ENCODE measurements at regions of chr2 and their contacts with region 1.

Region 1: DNA sequence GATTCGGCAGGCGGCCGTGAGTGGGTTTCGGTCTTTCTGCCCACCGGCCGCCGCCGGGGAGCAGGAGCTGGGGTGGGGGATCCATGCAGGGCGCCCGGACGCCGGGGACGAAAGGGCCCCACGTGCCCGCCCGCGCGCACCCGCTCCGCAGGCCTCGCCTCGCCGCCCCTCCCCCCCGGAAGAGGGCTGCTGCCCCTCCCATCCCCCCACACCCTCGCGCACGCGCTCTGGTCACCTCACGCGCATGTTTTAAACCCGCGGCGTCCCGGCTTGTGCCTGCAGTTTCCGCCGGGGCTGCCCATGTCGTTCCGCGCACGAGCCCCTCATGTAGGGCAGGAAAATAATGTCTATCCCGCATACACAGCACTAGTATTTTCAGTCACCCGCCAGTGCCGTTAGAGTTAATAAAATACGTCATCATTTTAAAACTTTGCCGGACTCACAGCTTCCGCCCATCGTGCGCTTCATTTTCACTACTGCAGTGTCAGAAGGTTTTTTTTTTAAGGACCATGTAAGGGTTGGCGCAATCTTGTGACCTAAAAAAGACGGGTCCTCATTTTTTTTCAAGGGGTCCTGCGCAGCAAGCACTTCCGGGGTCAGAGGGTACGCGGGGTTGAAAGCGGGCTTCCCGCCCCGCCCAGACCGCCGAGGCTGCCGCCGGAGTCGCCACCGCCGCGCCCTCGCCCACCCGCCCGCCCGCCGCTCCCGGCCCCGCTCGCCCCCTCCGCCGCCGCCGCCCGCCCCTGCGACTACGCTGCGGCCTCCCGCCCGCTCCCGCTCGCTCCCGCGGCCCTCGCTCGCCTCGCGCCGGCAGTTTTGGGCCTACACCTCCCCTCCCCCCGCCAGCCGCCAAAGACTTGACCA is at the start of gene PCBP1:
- DNase-seq: peak; percentile 84
- H3K4me3 ChIP-seq: peak within 1 kb of the TSS; percentile 67 to 91 (median 68)
- H3K27ac ChIP-seq: peak within 1 kb of the TSS; percentile 98 to 100 (median 100)
- H3K4me1 ChIP-seq: peaks cover 30 to 66% (median 43%) of the 10 kb centered on the region in 3 donors
- H3K27me3 ChIP-seq: no peaks in the 10 kb centered on the region
- CTCF ChIP-seq: peak in 1 of 6 experiments; percentile 20
- POLR2A ChIP-seq: peak in 2 of 4 donors; percentile 84 to 93
- total RNA-seq, gene PCBP1: 96.8 to 205 (median 177) TPM

Region 2: DNA sequence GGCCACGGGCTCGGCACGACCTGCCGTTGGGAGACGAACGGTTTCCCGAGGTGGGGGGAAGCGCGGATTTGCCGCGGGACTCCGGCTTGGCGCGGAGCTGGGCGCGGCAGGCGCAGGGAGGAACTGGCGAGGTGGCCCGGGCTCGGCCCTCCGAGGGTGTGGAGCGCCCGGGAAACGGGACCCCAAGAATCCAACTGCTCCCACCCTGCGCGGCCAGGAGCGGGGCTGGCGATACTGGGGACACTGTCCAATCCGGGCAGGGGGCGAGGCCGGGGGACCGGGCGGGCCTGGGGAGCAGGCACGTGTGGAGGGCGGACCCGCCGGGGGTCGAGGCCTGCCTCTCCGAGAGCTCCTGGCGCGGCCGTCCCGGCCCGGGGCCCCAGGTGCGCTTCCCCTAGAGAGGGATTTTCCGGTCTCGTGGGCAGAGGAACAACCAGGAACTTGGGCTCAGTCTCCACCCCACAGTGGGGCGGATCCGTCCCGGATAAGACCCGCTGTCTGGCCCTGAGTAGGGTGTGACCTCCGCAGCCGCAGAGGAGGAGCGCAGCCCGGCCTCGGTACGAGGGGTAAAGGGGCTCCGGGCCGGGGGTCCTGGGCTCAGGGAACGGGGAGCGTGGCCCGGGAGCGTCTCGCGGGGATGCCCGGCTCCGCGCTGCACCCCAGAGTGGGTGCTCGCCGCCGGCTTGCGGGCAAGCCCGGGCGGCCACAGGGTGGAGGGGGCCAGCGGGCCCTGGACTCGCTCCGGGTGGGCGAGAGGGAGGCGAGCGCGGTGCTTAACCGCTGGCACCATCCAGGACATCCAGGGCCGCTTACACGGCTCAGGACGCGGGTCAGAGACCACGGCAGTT is 345.2 kb before region 1 on chr2 and contains the start of gene ANXA4:
- intact Hi-C with region 1: loop called (anchors 10 kb)
- DNase-seq: no peak
- H3K4me3 ChIP-seq: peak within 1 kb of the TSS; percentile 77 to 98 (median 88)
- H3K27ac ChIP-seq: peak within 1 kb of the TSS; percentile 96 to 99 (median 98)
- H3K4me1 ChIP-seq: peaks cover 15 to 71% (median 34%) of the 10 kb centered on the region in 3 donors
- H3K27me3 ChIP-seq: no peaks in the 10 kb centered on the region
- CTCF ChIP-seq: peak in 2 of 6 experiments; percentile 3 to 7
- POLR2A ChIP-seq: peak in 3 of 4 donors; percentile 69 to 88 (median 73)
- total RNA-seq, gene ANXA4: 24.8 to 66.4 (median 43.6) TPM

Measured in esophagus squamous epithelium (tissue), 5 donors.